Cardiac septum (tissue), 1 donor: ENCODE measurements at regions of chr6 and their contacts with region 1.

Region 1: DNA sequence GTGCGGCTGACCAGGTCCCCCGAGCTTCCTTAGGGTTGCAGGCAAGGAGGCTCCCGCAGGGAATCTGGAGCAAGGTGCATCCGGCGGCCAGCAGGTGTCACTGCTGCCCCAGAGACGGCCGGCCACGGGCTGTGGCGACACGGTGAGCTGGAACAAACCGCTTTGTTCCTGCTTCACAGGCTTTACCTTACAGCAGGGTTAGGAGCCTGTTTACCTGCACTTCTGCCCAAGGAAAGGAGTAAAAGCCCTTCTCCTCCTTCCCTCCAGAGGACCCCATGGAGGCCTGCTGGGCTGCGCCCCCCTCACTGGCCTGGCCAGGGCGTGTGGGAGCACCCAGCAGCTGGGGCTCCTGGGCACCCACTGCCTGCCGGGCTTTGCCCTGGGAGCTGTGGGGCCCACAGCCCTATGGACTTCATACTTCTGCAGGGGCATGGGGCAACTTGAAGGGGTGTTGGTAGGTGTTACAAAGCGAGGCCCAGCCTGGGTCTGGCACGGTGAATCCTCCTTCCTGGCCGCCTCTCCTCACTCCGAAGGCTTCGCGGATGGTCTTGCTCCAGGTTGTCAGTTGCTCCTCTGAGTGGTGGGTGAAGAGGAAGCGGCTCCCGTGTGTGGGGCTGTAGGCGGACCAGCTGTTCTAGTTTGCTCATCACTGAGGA is 88.4 kb downstream of the CDC5L start:
- DNase-seq: peak; percentile 87

Region 2: GRCh38 chr6:44645276-44645675 is 169.4 kb after region 1 on chr6:
- intact Hi-C with region 1: loop called (anchors 5 kb)
- DNase-seq: no peak

Region 3: DNA sequence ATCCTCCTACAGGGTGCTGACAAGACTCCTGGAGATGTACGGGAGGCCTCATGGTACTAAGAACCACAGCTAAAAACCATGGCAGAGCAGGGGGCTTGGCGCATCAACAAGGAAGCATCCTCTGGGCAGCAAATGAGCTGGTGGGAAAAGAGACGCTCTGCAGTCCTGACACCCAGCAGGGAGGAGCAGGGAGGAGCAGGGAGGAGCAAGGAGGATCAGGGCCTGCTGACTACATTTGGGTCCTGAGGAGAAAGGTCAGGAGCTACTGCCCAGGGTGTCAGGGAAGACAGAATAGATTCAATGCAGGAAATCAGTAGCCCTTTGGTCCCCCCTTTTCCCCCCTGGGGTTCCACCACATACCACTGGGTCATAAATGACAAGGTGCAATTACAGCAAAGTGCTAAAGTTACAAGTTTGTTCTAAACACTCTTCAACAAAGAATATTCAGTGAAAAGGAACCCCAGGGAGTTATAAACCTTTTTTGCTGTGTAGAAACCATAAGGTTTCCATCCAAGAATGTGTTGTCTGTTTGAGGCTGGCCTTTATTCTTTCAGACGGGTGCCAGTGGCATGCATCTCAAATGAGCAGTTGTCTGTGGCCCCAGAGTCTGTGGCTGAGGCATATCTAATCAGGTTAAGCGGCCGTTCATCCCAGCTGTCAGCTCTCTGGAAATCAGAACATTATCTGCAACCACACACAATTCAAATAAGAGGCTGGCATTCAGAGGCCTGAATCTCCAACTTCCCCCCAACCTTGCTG is 236.6 kb after region 1 on chr6:
- intact Hi-C with region 1: no loop called
- DNase-seq: no peak

Region 4: DNA sequence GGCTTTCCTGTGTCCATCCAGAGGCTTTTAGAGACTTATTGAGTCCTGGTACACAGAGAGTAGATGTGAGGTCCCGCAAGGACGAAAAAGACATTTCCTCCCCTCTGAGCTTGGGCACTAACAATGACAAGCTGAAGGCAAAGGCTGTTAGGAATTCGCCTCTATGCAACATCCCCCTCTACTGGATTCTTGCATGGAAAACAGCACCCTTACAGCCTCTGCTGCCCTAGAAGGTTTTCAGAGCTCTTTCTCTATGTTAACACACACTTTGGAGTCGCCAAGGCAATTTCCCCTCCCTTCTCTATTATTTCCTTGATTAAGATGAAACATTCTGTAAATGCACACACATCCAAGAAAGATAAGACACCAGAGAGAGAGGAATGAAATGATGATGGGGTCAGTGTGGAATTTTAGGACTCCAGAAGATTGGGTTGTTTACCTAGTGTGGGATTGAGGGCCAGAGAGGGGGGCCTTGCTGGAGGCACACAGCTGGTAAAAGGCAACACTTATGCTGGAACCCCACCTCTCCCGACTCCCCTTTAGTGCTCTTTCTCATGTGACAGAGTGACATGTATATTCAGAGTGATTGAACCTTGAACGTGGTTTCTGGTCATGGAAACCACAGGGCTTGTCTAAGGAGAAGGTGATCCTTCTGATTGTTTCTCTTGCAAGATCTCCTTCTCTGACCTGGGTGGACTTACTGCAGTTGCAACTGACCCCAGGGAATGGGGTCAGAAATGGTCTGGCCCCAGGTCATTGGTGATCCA is 1239.0 kb after region 1 on chr6:
- intact Hi-C with region 1: loop called (anchors 5 kb)
- DNase-seq: no peak